ENCODE measurements at regions of chr4 and their contacts with region 1.

Region 1: DNA sequence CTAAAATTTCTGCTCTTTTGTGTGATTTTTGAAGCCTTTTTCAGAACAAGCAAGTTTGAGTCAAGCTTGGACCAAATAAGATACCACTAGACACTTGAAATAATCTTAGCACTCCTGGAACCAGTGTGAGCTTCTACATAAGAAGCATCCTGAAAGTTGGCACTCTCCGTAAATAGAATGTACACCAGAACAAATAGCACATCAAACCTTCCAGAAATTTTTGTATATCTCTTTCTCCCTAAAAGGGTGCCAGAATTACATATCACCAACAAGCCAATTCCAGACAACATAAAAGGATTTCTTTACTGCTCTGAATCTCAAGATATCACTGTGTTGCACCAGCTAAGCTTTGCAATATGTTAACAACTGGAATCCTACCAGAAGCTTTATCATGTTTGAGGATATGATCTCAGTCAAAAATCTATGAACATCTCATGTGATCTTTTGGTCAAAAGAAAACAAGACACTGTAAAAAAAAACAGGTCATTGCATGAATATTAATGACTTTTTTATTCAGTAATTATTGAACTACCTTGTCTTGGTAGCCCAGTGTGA is 117.2 kb downstream of the PRSS12 start:
- H3K4me3 ChIP-seq: no peak overlapping the region
- H3K27ac ChIP-seq: no peak overlapping the region
- H3K4me1 ChIP-seq: no peaks in the 10 kb centered on the region
- CTCF ChIP-seq: no peak

Region 2: GRCh38 chr4:118224239-118224829 is 11.3 kb before region 1 on chr4:
- CTCF ChIA-PET with region 1: interaction called, 10 read pairs
- POLR2A ChIA-PET with region 1: no interaction called
- H3K4me3 ChIP-seq: no peak overlapping the region
- H3K27ac ChIP-seq: no peak overlapping the region
- H3K4me1 ChIP-seq: no peaks in the 10 kb centered on the region
- CTCF ChIP-seq: peak; percentile 22; the same call in 1 of the 2 replicates

Measured in HEK293 (cell line).